ENCODE measurements at regions of chr2 and their contacts with region 1.

Region 1: DNA sequence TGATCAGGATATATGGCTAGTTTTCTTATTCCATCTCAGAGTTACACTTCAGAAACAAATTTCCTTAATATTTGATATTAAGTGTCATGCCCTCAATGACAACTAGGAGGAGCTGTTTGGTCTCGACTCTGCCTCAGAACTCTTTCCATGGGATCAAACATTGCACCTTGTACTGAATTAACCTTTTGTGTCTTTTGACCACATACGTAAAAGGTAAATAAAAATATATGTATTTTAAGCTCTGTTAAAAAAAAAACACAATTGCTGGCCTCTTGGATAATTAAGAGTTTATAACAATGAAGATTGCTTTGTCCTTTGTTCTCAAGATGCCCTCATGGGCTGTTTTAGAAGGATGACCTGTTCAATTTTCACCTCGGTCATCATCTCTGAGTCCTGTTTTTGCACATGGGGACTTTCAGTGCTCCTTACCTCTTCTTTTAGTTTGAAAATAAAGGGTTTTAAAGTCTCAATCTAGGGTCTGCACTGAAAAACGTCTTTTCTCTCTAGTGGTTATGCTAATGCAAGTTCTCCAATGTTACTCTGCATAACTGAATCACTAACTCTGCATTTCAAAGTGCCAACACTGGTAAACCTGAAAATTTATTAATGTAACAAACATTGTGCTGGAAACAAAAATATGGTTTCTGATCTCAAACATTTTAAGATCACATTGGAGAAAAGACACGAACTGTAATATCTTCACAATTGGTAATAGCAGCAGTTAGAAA is 18.8 kb upstream of the FN1 start:
- H3K4me3 Mint-ChIP-seq: no peak overlapping the region
- H3K27ac Mint-ChIP-seq: peak overlapping the region; percentile 13
- H3K4me1 Mint-ChIP-seq: no peaks in the 10 kb centered on the region
- H3K27me3 Mint-ChIP-seq: peaks cover 25% of the 10 kb centered on the region

Region 2: GRCh38 chr2:215711471-215712034 is 256.9 kb after region 1 on chr2:
- intact Hi-C with region 1: loop called (anchors 10 kb)
- H3K4me3 Mint-ChIP-seq: no peak overlapping the region
- H3K27ac Mint-ChIP-seq: peak overlapping the region; percentile 85
- H3K4me1 Mint-ChIP-seq: peaks cover 78% of the 10 kb centered on the region
- H3K27me3 Mint-ChIP-seq: peaks cover 2% of the 10 kb centered on the region

Region 3: GRCh38 chr2:215843579-215843978 is 388.9 kb after region 1 on chr2:
- intact Hi-C with region 1: loop called (anchors 10 kb)
- H3K4me3 Mint-ChIP-seq: no peak overlapping the region
- H3K27ac Mint-ChIP-seq: no peak overlapping the region
- H3K4me1 Mint-ChIP-seq: peaks cover 19% of the 10 kb centered on the region
- H3K27me3 Mint-ChIP-seq: peaks cover 11% of the 10 kb centered on the region

Region 4: GRCh38 chr2:215920244-215921100 is 465.8 kb after region 1 on chr2:
- intact Hi-C with region 1: loop called (anchors 1 kb)
- H3K4me3 Mint-ChIP-seq: no peak overlapping the region
- H3K27ac Mint-ChIP-seq: peak overlapping the region; percentile 93
- H3K4me1 Mint-ChIP-seq: peaks cover 40% of the 10 kb centered on the region
- H3K27me3 Mint-ChIP-seq: peaks cover 14% of the 10 kb centered on the region

Measured in dendritic cell treated with granulocyte-macrophage colony-stimulating factor and Interleukin-4, amounts not matched to agents 40 ng/mL and 50 ng/mL, for 4 days (primary cell).